Dendritic cell treated with granulocyte-macrophage colony-stimulating factor and Interleukin-4, amounts not matched to agents 40 ng/mL and 50 ng/mL, for 4 days (primary cell): ENCODE measurements at regions of chr18 and their contacts with region 1.

Region 1: GRCh38 chr18:9943311-9943710 is 29.5 kb downstream of the VAPA start:
- H3K4me3 Mint-ChIP-seq: no peak overlapping the region
- H3K27ac Mint-ChIP-seq: no peak overlapping the region
- H3K4me1 Mint-ChIP-seq: no peaks in the 10 kb centered on the region
- H3K27me3 Mint-ChIP-seq: no peaks in the 10 kb centered on the region

Region 2: GRCh38 chr18:9594823-9595596 is 348.3 kb before region 1 on chr18:
- intact Hi-C with region 1: loop called (anchors 10 kb)
- H3K4me3 Mint-ChIP-seq: no peak overlapping the region
- H3K27ac Mint-ChIP-seq: peak overlapping the region; percentile 15
- H3K4me1 Mint-ChIP-seq: peaks cover 32% of the 10 kb centered on the region
- H3K27me3 Mint-ChIP-seq: no peaks in the 10 kb centered on the region

Region 3: GRCh38 chr18:9876867-9877654 is 66.2 kb before region 1 on chr18:
- intact Hi-C with region 1: no loop called
- H3K4me3 Mint-ChIP-seq: no peak overlapping the region
- H3K27ac Mint-ChIP-seq: no peak overlapping the region
- H3K4me1 Mint-ChIP-seq: no peaks in the 10 kb centered on the region
- H3K27me3 Mint-ChIP-seq: no peaks in the 10 kb centered on the region